ENCODE measurements at regions of chr9 and their contacts with region 1.

Region 1: DNA sequence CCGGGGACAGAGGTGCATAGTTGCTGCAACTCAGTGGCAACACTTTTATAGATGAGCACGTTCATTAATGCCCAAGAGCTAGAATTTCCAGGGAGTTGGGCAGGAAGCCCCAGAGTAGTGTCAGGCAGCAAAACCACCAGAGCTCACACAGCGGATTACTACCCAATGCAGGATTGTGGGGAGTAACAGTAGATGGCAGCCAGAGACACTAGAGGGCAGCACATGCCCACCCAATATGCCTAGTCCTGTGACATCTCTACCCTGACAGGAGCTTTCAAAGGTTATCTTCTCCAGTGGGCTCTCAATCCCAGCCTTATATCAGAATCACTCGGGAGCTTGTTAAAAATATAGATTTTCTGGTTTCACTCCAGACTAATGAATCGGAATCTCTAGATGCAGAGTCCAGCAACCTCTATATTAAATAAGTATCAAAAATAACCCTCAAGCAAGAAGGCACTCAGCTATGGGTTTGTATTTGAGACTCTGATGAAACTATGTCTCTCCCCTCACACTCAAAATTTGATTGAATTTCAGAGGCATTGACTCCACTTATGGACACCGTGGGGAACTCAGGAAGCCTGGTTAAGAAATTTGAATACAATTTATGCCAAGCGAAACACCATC is 58.4 kb upstream of the PHF24 start:
- DNase-seq: peak; percentile 74 to 86 (median 79)
- H3K4me3 ChIP-seq: no peak overlapping the region
- H3K27ac ChIP-seq: no peak overlapping the region
- H3K4me1 ChIP-seq: no peaks in the 10 kb centered on the region
- H3K27me3 ChIP-seq: peaks cover 4 to 33% (median 14%) of the 10 kb centered on the region in 5 experiments

Region 2: GRCh38 chr9:34884732-34885131 is 14.9 kb before region 1 on chr9:
- CTCF ChIA-PET with region 1: interaction called, 14 read pairs
- POLR2A ChIA-PET with region 1: no interaction called
- DNase-seq: no peak
- H3K4me3 ChIP-seq: no peak overlapping the region
- H3K27ac ChIP-seq: no peak overlapping the region
- H3K4me1 ChIP-seq: no peaks in the 10 kb centered on the region
- H3K27me3 ChIP-seq: peaks cover 0 to 11% (median 0%) of the 10 kb centered on the region in 5 experiments

Region 3: GRCh38 chr9:34984049-34984448 is 84.4 kb after region 1 on chr9:
- CTCF ChIA-PET with region 1: interaction called, 15 read pairs
- POLR2A ChIA-PET with region 1: no interaction called
- DNase-seq: peak in 2 of 3 donors; percentile 75 to 76
- H3K4me3 ChIP-seq: no peak overlapping the region
- H3K27ac ChIP-seq: no peak overlapping the region
- H3K4me1 ChIP-seq: peaks cover 24 to 62% (median 49%) of the 10 kb centered on the region in 4 experiments
- H3K27me3 ChIP-seq: no peaks in the 10 kb centered on the region

Region 4: DNA sequence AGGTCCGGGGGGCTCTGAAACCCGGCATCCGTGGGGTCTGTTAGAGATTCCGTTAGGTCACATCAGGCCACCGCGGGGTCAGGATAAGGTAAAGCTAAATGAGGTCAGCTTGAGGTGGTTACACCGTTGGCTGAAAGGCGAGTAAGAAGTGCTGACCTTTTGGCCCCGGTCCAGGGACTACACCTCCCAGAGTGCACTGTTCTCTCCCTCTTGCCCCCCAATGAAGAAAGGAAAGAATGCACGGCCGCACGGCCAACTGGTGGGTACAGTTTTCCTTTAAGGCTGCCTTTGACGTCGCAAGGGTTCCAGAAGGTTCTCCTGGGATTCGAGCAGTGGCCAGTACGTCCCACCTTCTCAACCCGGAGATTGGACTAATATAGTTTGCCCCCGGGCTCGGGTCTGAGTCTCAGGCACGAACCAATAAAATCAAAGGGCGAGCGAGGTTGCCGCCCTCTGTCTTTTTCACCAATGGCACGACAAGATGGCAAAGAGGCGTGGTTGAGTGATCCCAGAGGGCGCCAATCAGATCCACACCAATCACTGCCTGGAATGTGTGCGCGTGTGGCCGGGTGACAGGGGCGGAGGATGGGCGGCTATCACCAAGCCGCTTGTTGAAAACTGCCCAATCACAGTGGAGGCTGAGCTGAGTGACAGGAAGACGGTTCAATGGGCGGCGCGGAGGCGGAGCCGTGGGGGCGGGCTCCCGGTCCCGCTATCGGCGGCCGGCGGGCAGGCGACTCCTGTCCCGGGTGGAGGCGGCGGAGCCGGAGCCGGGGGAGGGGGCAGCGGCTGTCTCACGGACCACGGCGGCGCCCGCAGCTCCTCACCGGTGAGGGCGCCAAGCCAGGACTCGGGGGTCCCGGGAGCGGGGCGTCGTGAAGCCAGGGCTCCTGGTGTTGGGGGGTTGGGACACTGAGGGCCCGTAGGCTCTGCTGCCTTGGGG is 89.6 kb after region 1 on chr9 and contains the start of gene DNAJB5:
- CTCF ChIA-PET with region 1: interaction called, 20 read pairs
- POLR2A ChIA-PET with region 1: no interaction called
- DNase-seq: peak; percentile 99
- H3K4me3 ChIP-seq: peak within 1 kb of the TSS; percentile 42 to 91 (median 78)
- H3K27ac ChIP-seq: peak within 1 kb of the TSS in 1 of 2 experiments; percentile 74
- H3K4me1 ChIP-seq: peaks cover 12 to 50% (median 34%) of the 10 kb centered on the region in 4 experiments
- H3K27me3 ChIP-seq: peaks cover 0 to 11% (median 3%) of the 10 kb centered on the region in 5 experiments

Region 5: DNA sequence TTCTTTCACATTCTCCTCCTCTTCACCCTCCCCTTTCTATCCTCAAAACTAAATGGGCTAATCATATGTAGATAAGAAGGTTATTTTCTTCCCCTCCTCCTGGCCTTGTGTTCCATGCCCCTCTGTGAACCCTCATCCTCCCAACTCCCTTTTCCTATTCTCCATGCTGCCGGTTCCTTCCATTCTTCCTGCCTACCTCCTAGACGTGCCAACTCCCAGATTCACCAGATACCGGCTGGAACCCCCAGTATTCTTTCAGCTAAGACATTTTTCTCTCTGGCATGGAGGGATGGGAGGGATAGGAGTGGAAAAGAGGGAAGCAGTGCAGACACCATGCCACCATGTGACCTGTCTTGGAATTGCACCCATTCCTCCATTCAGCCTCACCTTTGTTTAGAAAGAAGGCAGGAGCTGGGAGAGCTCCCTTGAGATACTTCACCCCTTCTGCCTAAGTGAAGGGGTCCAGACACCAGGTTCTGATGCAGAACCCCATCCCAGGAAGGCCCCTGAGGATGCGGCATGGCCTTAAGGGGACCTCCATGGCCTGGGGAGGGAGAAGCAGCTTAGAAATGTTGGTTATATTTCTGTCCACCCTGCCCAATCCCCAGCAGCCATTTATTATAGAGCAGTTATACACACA is 94.7 kb after region 1 on chr9:
- CTCF ChIA-PET with region 1: interaction called, 20 read pairs
- POLR2A ChIA-PET with region 1: no interaction called
- DNase-seq: no peak
- H3K4me3 ChIP-seq: no peak overlapping the region
- H3K27ac ChIP-seq: no peak overlapping the region
- H3K4me1 ChIP-seq: peaks cover 0 to 10% (median 10%) of the 10 kb centered on the region in 4 experiments
- H3K27me3 ChIP-seq: peaks cover 0 to 11% (median 3%) of the 10 kb centered on the region in 5 experiments

Region 6: GRCh38 chr9:35014517-35014916 is 114.9 kb after region 1 on chr9:
- CTCF ChIA-PET with region 1: no interaction called
- POLR2A ChIA-PET with region 1: no interaction called
- DNase-seq: no peak
- H3K4me3 ChIP-seq: no peak overlapping the region
- H3K27ac ChIP-seq: no peak overlapping the region
- H3K4me1 ChIP-seq: no peaks in the 10 kb centered on the region
- H3K27me3 ChIP-seq: no peaks in the 10 kb centered on the region

Region 7: GRCh38 chr9:35051069-35051967 is 151.7 kb after region 1 on chr9:
- CTCF ChIA-PET with region 1: interaction called, 49 read pairs
- POLR2A ChIA-PET with region 1: interaction called, 4 read pairs
- DNase-seq: peak; percentile 53 to 80 (median 78)
- H3K4me3 ChIP-seq: no peak overlapping the region
- H3K27ac ChIP-seq: peak overlapping the region in 1 of 2 experiments; percentile 6
- H3K4me1 ChIP-seq: no peaks in the 10 kb centered on the region
- H3K27me3 ChIP-seq: no peaks in the 10 kb centered on the region

Region 8: DNA sequence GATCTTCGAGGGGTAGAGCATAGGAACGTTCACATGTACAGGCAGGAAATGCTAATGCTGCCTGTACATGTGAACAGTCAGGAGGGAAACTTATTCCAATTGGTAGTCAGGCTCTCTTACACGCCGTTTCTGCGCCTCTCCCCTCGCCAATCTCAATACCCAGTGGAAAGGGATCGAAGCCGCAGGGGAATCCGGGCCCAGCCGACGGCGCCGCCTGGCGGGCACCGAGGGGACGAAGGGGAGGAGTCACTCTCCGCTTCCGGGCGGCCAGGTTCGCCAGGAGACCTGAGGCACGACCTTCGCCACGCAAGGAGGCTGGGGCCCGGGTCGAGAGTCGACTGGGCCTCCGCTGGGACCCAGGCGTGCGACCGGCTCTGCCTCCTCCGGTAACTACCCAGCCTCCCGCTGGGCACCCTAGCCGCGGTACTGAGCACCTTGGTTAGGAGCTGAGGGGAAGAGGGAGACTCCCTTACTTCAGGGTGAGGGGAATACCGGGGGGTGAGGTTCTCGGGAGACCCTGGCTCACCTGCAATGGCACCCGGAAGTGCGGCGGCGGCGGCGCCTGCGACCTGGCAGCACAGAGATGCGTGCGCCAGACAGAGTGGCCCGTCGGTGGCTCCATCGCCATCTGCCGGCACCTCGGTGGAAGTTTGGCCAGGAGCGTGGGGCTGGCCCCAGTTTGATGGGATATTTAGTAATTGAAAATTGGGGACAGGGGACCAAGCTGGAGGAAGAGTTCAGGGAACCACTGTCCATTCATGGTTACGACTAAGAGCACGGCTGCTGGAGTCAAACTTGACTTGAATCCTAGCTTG is 196.6 kb after region 1 on chr9 and contains the start of gene PIGO:
- CTCF ChIA-PET with region 1: interaction called, 14 read pairs
- POLR2A ChIA-PET with region 1: no interaction called
- DNase-seq: peak; percentile 90 to 92 (median 92)
- H3K4me3 ChIP-seq: peak within 1 kb of the TSS; percentile 87 to 98 (median 94)
- H3K27ac ChIP-seq: peak within 1 kb of the TSS; percentile 98
- H3K4me1 ChIP-seq: peaks cover 0 to 15% (median 14%) of the 10 kb centered on the region in 4 experiments
- H3K27me3 ChIP-seq: no peaks in the 10 kb centered on the region

Measured in common myeloid progenitor, CD34-positive (primary cell).